Natural killer cell (primary cell): ENCODE measurements at regions of chr2 and their contacts with region 1.

Region 1: DNA sequence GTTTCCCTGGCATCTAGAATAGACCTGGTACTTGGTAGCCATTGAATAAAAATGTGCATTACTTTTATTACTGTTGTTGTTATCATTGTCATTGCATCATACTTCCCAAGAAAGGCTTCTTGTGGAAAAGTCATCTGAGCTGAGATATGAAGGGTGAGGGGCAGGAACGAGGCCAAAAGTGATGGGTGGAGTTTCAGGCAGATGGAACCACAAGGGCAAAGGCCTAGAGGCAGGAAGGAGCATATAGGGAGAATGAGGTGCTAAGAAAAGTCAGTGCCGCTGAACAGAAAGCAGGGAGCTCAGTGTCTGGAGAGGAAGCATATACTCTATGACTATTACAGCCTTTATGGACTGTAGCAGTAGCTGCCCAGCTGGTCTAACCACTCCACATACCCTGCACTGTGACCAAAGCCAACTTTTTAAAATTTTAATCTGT is 219.3 kb downstream of the SPP2 start:
- DNase-seq: no peak
- ATAC-seq: no peak
- H3K4me3 ChIP-seq: no peak overlapping the region
- H3K4me3 Mint-ChIP-seq: no peak overlapping the region
- H3K27ac ChIP-seq: no peak overlapping the region
- H3K27ac Mint-ChIP-seq: peak overlapping the region in 1 of 2 donors; percentile 17
- H3K4me1 ChIP-seq: peaks cover 31% of the 10 kb centered on the region
- H3K4me1 Mint-ChIP-seq: peaks cover 60 to 64% of the 10 kb centered on the region in 2 donors
- H3K27me3 ChIP-seq: no peaks in the 10 kb centered on the region
- H3K27me3 Mint-ChIP-seq: no peaks in the 10 kb centered on the region
- CTCF ChIP-seq: no peak

Region 2: DNA sequence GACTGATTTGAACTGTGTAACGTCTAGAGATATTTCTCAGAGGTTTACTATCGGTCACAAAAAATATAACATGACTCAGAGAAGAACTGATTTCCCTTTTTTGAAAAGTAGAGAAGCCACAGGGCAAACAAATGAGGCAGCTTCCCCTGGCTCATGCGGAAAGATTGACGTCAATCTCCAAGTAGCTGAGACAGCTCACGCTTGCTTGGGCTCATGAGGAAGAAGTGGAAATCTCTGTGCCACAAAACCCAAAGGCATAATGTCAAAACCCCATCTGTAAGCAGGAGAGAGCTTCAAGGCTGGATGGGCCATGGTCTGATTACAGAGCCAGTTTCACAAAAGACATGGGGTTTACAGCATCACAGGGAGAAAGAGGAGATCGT is 39.0 kb after region 1 on chr2:
- intact Hi-C with region 1: loop called (anchors 5 kb)
- DNase-seq: peak; percentile 30 to 88
- ATAC-seq: peak; percentile 82 to 87 (median 85)
- H3K4me3 ChIP-seq: no peak overlapping the region
- H3K4me3 Mint-ChIP-seq: no peak overlapping the region
- H3K27ac ChIP-seq: peak overlapping the region; percentile 54
- H3K27ac Mint-ChIP-seq: peak overlapping the region; percentile 70 to 93
- H3K4me1 ChIP-seq: peaks cover 25% of the 10 kb centered on the region
- H3K4me1 Mint-ChIP-seq: peaks cover 23 to 49% of the 10 kb centered on the region in 2 donors
- H3K27me3 ChIP-seq: no peaks in the 10 kb centered on the region
- H3K27me3 Mint-ChIP-seq: no peaks in the 10 kb centered on the region
- CTCF ChIP-seq: no peak